ENCODE measurements at regions of chr14 and their contacts with region 1.

Region 1: DNA sequence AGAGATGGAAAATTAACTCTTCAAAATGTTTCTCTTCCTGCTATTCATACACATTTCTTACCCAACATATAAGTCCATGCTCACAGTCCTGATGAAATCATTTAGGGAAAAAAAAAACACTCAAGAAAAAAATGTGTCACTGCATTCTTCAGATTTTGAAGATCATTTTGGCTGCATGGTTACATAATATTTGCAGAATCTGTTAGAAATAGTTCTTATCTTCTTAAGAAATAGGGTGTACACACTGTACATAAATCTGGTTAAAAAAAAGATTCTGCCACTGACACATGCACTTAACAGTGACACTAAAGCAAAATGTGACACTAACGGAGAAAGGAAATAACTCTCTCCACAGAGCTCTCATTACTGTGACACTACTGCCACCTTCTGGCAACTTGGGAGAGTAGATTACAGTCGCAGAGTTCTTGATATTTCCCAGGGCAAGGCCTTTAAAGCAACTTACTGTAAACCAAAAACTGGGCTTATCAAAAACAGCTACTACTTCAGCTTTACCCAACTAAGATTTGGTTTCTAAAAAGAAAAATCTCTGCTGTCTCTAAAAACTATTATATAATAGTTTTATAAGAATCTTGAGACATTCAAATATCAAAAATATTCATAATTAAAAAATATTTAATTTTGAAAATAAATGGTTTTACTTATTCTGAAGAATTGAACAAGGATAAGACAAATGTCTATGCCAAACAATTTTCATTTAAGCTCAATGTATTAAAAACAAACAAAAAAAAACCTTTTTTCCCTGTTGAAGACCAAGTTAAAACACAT is 65.0 kb downstream of the SETD3 start:
- DNase-seq: peak; percentile 75
- ATAC-seq: peak; percentile 76
- H3K4me3 ChIP-seq: no peak overlapping the region
- H3K4me3 Mint-ChIP-seq: no peak overlapping the region
- H3K27ac ChIP-seq: no peak overlapping the region
- H3K27ac Mint-ChIP-seq: no peak overlapping the region
- H3K4me1 ChIP-seq: no peaks in the 10 kb centered on the region
- H3K4me1 Mint-ChIP-seq: peaks cover 2% of the 10 kb centered on the region
- H3K27me3 ChIP-seq: no peaks in the 10 kb centered on the region
- H3K27me3 Mint-ChIP-seq: no peaks in the 10 kb centered on the region
- CTCF ChIP-seq: peak; percentile 95

Region 2: DNA sequence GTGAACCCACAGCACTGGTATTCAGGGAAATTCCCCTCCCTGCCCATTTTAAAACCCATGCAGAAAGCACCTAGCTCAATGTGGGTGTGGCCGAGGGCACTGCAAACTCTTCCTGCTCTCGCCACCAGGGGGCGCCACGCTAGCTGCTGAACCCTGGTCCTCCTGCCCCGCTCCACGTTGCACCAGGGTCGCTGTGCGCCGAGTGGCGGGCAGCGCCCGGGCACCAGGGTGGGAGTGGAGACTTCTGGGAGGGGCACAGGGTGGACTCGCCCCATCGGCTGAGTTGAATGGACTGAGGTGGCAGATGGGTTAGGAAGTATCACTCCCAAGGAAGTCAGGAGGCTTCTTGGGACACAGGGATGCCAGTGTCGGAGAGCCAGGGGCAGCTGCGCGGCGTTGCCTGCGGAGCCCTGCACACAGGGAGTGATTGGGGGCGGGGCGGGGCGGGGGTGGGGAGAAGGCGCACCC is 95.5 kb before region 1 on chr14:
- CTCF ChIA-PET with region 1: interaction called, 15 read pairs
- POLR2A ChIA-PET with region 1: no interaction called
- intact Hi-C with region 1: loop called (anchors 1 kb)
- DNase-seq: peak; percentile 54
- ATAC-seq: peak; percentile 39
- H3K4me3 ChIP-seq: no peak overlapping the region
- H3K4me3 Mint-ChIP-seq: no peak overlapping the region
- H3K27ac ChIP-seq: no peak overlapping the region
- H3K27ac Mint-ChIP-seq: no peak overlapping the region
- H3K4me1 ChIP-seq: no peaks in the 10 kb centered on the region
- H3K4me1 Mint-ChIP-seq: peaks cover 2% of the 10 kb centered on the region
- H3K27me3 ChIP-seq: no peaks in the 10 kb centered on the region
- H3K27me3 Mint-ChIP-seq: no peaks in the 10 kb centered on the region
- CTCF ChIP-seq: peak; percentile 70

Region 3: DNA sequence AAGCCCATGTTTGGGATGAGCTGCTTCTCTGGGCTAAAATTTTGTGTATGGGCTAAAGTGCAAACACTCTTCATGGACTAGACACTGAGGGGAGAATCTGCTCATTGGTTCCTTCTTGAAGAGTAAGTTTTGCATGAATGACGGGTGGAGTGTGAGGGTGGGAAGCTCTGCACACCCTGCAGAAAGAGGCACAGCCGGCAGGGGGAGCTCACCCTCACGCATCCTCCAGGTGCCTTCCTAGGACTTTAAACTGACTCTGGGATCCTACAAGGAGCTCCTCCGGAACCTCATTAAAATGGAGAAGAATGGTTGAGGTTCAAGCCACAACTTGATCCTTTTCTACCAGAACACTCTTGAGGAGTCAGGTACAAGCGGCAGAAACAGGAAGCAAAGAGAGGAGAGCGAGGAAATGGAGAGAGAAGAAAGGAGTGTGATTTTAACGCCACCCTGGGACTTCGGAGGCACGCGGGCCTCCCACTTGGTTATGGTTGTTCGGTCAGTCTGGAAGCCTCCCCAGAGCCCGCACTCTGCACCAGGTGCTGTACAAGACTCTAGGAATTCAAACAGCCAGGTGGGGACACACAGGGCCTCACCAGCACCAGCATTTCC is 22.5 kb before region 1 on chr14:
- CTCF ChIA-PET with region 1: interaction called, 70 read pairs
- POLR2A ChIA-PET with region 1: no interaction called
- intact Hi-C with region 1: loop called (anchors 1 kb)
- DNase-seq: peak; percentile 19
- ATAC-seq: no peak
- H3K4me3 ChIP-seq: no peak overlapping the region
- H3K4me3 Mint-ChIP-seq: no peak overlapping the region
- H3K27ac ChIP-seq: no peak overlapping the region
- H3K27ac Mint-ChIP-seq: no peak overlapping the region
- H3K4me1 ChIP-seq: peaks cover 0 to 5% of the 10 kb centered on the region in 2 donors
- H3K4me1 Mint-ChIP-seq: peaks cover 6% of the 10 kb centered on the region
- H3K27me3 ChIP-seq: no peaks in the 10 kb centered on the region
- H3K27me3 Mint-ChIP-seq: no peaks in the 10 kb centered on the region
- CTCF ChIP-seq: peak; percentile 62

Region 4: GRCh38 chr14:99401621-99402284 is 13.9 kb before region 1 on chr14:
- CTCF ChIA-PET with region 1: interaction called, 70 read pairs
- POLR2A ChIA-PET with region 1: no interaction called
- intact Hi-C with region 1: no loop called
- DNase-seq: no peak
- ATAC-seq: no peak
- H3K4me3 ChIP-seq: no peak overlapping the region
- H3K4me3 Mint-ChIP-seq: no peak overlapping the region
- H3K27ac ChIP-seq: peak overlapping the region in 1 of 2 donors; percentile 47
- H3K27ac Mint-ChIP-seq: peak overlapping the region; percentile 12
- H3K4me1 ChIP-seq: peaks cover 6 to 7% of the 10 kb centered on the region in 2 donors
- H3K4me1 Mint-ChIP-seq: peaks cover 20% of the 10 kb centered on the region
- H3K27me3 ChIP-seq: no peaks in the 10 kb centered on the region
- H3K27me3 Mint-ChIP-seq: no peaks in the 10 kb centered on the region
- CTCF ChIP-seq: no peak